ENCODE measurements at regions of chr15 and their contacts with region 1.

Region 1: GRCh38 chr15:89206908-89207331 is 14.5 kb downstream of the RLBP1 start:
- DNase-seq: peak; percentile 93
- H3K4me3 ChIP-seq: peak overlapping the region; percentile 32 to 36; a peak in 3 of 4 replicates
- H3K27ac ChIP-seq: no peak overlapping the region
- H3K4me1 ChIP-seq: no peaks in the 10 kb centered on the region; a peak in 1 of 4 replicates
- H3K27me3 ChIP-seq: no peaks in the 10 kb centered on the region
- CTCF ChIP-seq: peak; percentile 96
- EP300 ChIP-seq: no peak
- RAD21 ChIP-seq: peak; percentile 85

Region 2: GRCh38 chr15:89187976-89188514 is 18.9 kb before region 1 on chr15:
- CTCF ChIA-PET with region 1: interaction called, 10 read pairs
- POLR2A ChIA-PET with region 1: no interaction called
- DNase-seq: no peak
- H3K4me3 ChIP-seq: no peak overlapping the region
- H3K27ac ChIP-seq: no peak overlapping the region
- H3K4me1 ChIP-seq: peaks cover 4 to 9% of the 10 kb centered on the region in 2 experiments; a peak in 1 of 4 replicates
- H3K27me3 ChIP-seq: no peaks in the 10 kb centered on the region
- CTCF ChIP-seq: no peak
- EP300 ChIP-seq: no peak
- RAD21 ChIP-seq: no peak

Region 3: GRCh38 chr15:89230277-89230676 is 23.4 kb after region 1 on chr15:
- CTCF ChIA-PET with region 1: interaction called, 56 read pairs
- POLR2A ChIA-PET with region 1: no interaction called
- DNase-seq: no peak
- H3K4me3 ChIP-seq: no peak overlapping the region
- H3K27ac ChIP-seq: no peak overlapping the region
- H3K4me1 ChIP-seq: no peaks in the 10 kb centered on the region
- H3K27me3 ChIP-seq: peaks cover 4% of the 10 kb centered on the region; the same call in 1 of the 2 replicates
- CTCF ChIP-seq: no peak
- EP300 ChIP-seq: no peak
- RAD21 ChIP-seq: no peak

Region 4: GRCh38 chr15:89278307-89278706 is 71.4 kb after region 1 on chr15:
- CTCF ChIA-PET with region 1: interaction called, 17 read pairs
- POLR2A ChIA-PET with region 1: no interaction called
- DNase-seq: no peak
- H3K4me3 ChIP-seq: no peak overlapping the region
- H3K27ac ChIP-seq: no peak overlapping the region
- H3K4me1 ChIP-seq: no peaks in the 10 kb centered on the region
- H3K27me3 ChIP-seq: no peaks in the 10 kb centered on the region
- CTCF ChIP-seq: no peak
- EP300 ChIP-seq: no peak
- RAD21 ChIP-seq: no peak

Region 5: GRCh38 chr15:89305395-89305794 is 98.5 kb after region 1 on chr15:
- CTCF ChIA-PET with region 1: interaction called, 19 read pairs
- POLR2A ChIA-PET with region 1: interaction called, 3 read pairs
- DNase-seq: no peak
- H3K4me3 ChIP-seq: no peak overlapping the region
- H3K27ac ChIP-seq: no peak overlapping the region
- H3K4me1 ChIP-seq: peaks cover 0 to 17% of the 10 kb centered on the region in 2 experiments; a peak in 2 of 4 replicates
- H3K27me3 ChIP-seq: no peaks in the 10 kb centered on the region
- CTCF ChIP-seq: no peak
- EP300 ChIP-seq: no peak
- RAD21 ChIP-seq: no peak

Region 6: DNA sequence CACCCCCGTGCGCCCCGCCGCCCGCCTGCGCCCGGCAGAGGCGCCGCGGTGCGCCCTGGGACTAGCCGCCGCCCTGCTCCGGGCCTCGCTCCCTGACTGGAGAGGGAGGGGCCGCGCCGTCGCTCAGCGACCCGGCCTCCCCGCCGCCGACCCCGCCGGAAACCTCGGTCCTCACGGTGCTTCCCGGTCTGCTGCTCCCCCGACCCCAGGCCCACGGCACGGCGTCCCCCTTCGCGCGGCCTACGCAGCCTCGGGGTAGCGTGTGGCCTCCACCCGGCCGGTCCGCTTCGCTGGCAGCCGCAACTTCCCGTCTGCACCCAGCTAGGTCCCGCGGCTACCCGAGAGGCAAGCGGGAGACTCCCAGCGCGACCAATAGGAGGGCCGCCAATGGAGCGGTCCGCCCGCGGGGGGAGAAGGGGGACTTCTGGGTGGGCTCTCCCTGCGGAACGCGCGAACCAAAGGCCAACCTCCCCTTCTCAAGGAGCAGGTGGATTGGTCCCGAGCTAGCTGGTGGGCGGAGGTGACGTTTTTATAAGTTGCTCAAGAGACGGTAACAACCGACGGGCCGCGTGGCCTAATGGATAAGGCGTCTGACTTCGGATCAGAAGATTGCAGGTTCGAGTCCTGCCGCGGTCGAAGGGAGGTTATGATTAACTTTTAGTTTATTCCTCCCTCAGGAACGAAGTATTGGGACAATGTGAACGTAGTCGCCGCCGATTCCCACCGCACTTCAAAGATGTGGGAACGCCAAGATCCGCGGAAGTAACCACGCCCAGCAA is 127.8 kb after region 1 on chr15 and contains the start of gene POLG:
- CTCF ChIA-PET with region 1: interaction called, 17 read pairs
- POLR2A ChIA-PET with region 1: no interaction called
- DNase-seq: peak; percentile 97
- H3K4me3 ChIP-seq: peak within 1 kb of the TSS; percentile 80 to 87
- H3K27ac ChIP-seq: peak within 1 kb of the TSS; percentile 76 to 95
- H3K4me1 ChIP-seq: peaks cover 18 to 44% of the 10 kb centered on the region in 2 experiments
- H3K27me3 ChIP-seq: no peaks in the 10 kb centered on the region
- CTCF ChIP-seq: no peak
- EP300 ChIP-seq: peak; percentile 37 to 69; a peak in 2 of 4 replicates
- RAD21 ChIP-seq: no peak
- polyA plus RNA-seq, gene POLG: 24.9 and 25.1 TPM in 2 replicates

Region 7: GRCh38 chr15:89378296-89379151 is 171.6 kb after region 1 on chr15:
- CTCF ChIA-PET with region 1: no interaction called
- POLR2A ChIA-PET with region 1: no interaction called
- DNase-seq: no peak
- H3K4me3 ChIP-seq: no peak overlapping the region
- H3K27ac ChIP-seq: no peak overlapping the region
- H3K4me1 ChIP-seq: peaks cover 2 to 39% of the 10 kb centered on the region in 2 experiments
- H3K27me3 ChIP-seq: no peaks in the 10 kb centered on the region
- CTCF ChIP-seq: no peak
- EP300 ChIP-seq: no peak
- RAD21 ChIP-seq: no peak

Region 8: GRCh38 chr15:89630974-89631901 is 424.3 kb after region 1 on chr15:
- CTCF ChIA-PET with region 1: no interaction called
- POLR2A ChIA-PET with region 1: no interaction called
- DNase-seq: peak; percentile 20
- H3K4me3 ChIP-seq: no peak overlapping the region
- H3K27ac ChIP-seq: no peak overlapping the region; a peak in 1 of 4 replicates
- H3K4me1 ChIP-seq: no peaks in the 10 kb centered on the region
- H3K27me3 ChIP-seq: no peaks in the 10 kb centered on the region
- CTCF ChIP-seq: no peak
- EP300 ChIP-seq: no peak
- RAD21 ChIP-seq: no peak

Measured in SK-N-SH (cell line).